CD8-positive, alpha-beta T cell (primary cell): ENCODE measurements at regions of chr3 and their contacts with region 1.

Region 1: GRCh38 chr3:53114011-53114400 is 16.2 kb downstream of the RFT1 start:
- DNase-seq: peak; percentile 67 to 88 (median 84)
- ATAC-seq: peak; percentile 89
- H3K4me3 ChIP-seq: no peak overlapping the region
- H3K4me3 Mint-ChIP-seq: no peak overlapping the region
- H3K27ac ChIP-seq: peak overlapping the region in 1 of 2 experiments; percentile 15
- H3K27ac Mint-ChIP-seq: no peak overlapping the region
- H3K4me1 ChIP-seq: no peaks in the 10 kb centered on the region
- H3K4me1 Mint-ChIP-seq: peaks cover 8% of the 10 kb centered on the region
- H3K27me3 ChIP-seq: no peaks in the 10 kb centered on the region
- H3K27me3 Mint-ChIP-seq: no peaks in the 10 kb centered on the region
- CTCF ChIP-seq: peak; percentile 89

Region 2: GRCh38 chr3:52606373-52607085 is 507.5 kb before region 1 on chr3:
- CTCF ChIA-PET with region 1: no interaction called
- POLR2A ChIA-PET with region 1: no interaction called
- intact Hi-C with region 1: no loop called
- DNase-seq: no peak
- ATAC-seq: no peak
- H3K4me3 ChIP-seq: no peak overlapping the region
- H3K4me3 Mint-ChIP-seq: no peak overlapping the region
- H3K27ac ChIP-seq: no peak overlapping the region
- H3K27ac Mint-ChIP-seq: peak overlapping the region; percentile 28
- H3K4me1 ChIP-seq: no peaks in the 10 kb centered on the region
- H3K4me1 Mint-ChIP-seq: peaks cover 4% of the 10 kb centered on the region
- H3K27me3 ChIP-seq: no peaks in the 10 kb centered on the region
- H3K27me3 Mint-ChIP-seq: no peaks in the 10 kb centered on the region
- CTCF ChIP-seq: no peak

Region 3: GRCh38 chr3:52827441-52827840 is 286.6 kb before region 1 on chr3:
- CTCF ChIA-PET with region 1: no interaction called
- POLR2A ChIA-PET with region 1: no interaction called
- intact Hi-C with region 1: no loop called
- DNase-seq: no peak
- ATAC-seq: no peak
- H3K4me3 ChIP-seq: no peak overlapping the region
- H3K4me3 Mint-ChIP-seq: no peak overlapping the region
- H3K27ac ChIP-seq: no peak overlapping the region
- H3K27ac Mint-ChIP-seq: no peak overlapping the region
- H3K4me1 ChIP-seq: no peaks in the 10 kb centered on the region
- H3K4me1 Mint-ChIP-seq: no peaks in the 10 kb centered on the region
- H3K27me3 ChIP-seq: no peaks in the 10 kb centered on the region
- H3K27me3 Mint-ChIP-seq: no peaks in the 10 kb centered on the region
- CTCF ChIP-seq: no peak

Region 4: GRCh38 chr3:53303957-53304356 is 190.0 kb after region 1 on chr3:
- CTCF ChIA-PET with region 1: no interaction called
- POLR2A ChIA-PET with region 1: no interaction called
- intact Hi-C with region 1: loop called in 1 of 2 experiments (anchors 1 kb)
- DNase-seq: no peak
- ATAC-seq: no peak
- H3K4me3 ChIP-seq: no peak overlapping the region
- H3K4me3 Mint-ChIP-seq: no peak overlapping the region
- H3K27ac ChIP-seq: no peak overlapping the region
- H3K27ac Mint-ChIP-seq: no peak overlapping the region
- H3K4me1 ChIP-seq: no peaks in the 10 kb centered on the region
- H3K4me1 Mint-ChIP-seq: no peaks in the 10 kb centered on the region
- H3K27me3 ChIP-seq: no peaks in the 10 kb centered on the region
- H3K27me3 Mint-ChIP-seq: no peaks in the 10 kb centered on the region
- CTCF ChIP-seq: no peak